Tibial artery (tissue), 4 donors: ENCODE measurements at regions of chr3 and their contacts with region 1.

Region 1: GRCh38 chr3:120417272-120417911 is 33.4 kb downstream of the FSTL1 start:
- DNase-seq: peak; percentile 94 to 97
- H3K4me3 ChIP-seq: peak overlapping the region; percentile 33 to 36
- H3K27ac ChIP-seq: peak overlapping the region; percentile 81 to 95
- H3K4me1 ChIP-seq: peaks cover 0 to 56% (median 45%) of the 10 kb centered on the region in 4 donors
- H3K27me3 ChIP-seq: no peaks in the 10 kb centered on the region
- CTCF ChIP-seq: peak; percentile 88 to 91

Region 2: GRCh38 chr3:119891944-119892721 is 525.3 kb before region 1 on chr3:
- intact Hi-C with region 1: loop called (anchors 5 kb)
- DNase-seq: no peak
- H3K4me3 ChIP-seq: no peak overlapping the region
- H3K27ac ChIP-seq: no peak overlapping the region
- H3K4me1 ChIP-seq: peaks cover 0 to 6% (median 4%) of the 10 kb centered on the region in 4 donors
- H3K27me3 ChIP-seq: no peaks in the 10 kb centered on the region
- CTCF ChIP-seq: peak; percentile 61 to 73

Region 3: GRCh38 chr3:120239644-120240043 is 177.7 kb before region 1 on chr3:
- intact Hi-C with region 1: loop called (anchors 5 kb)
- DNase-seq: no peak
- H3K4me3 ChIP-seq: no peak overlapping the region
- H3K27ac ChIP-seq: no peak overlapping the region
- H3K4me1 ChIP-seq: no peaks in the 10 kb centered on the region
- H3K27me3 ChIP-seq: no peaks in the 10 kb centered on the region
- CTCF ChIP-seq: no peak

Region 4: GRCh38 chr3:120348981-120349818 is 68.2 kb before region 1 on chr3 and contains the start of gene LRRC58:
- intact Hi-C with region 1: loop called (anchors 5 kb)
- DNase-seq: peak; percentile 89 to 95
- H3K4me3 ChIP-seq: peak within 1 kb of the TSS; percentile 65 to 87
- H3K27ac ChIP-seq: peak within 1 kb of the TSS; percentile 88
- H3K4me1 ChIP-seq: peaks cover 0 to 26% (median 17%) of the 10 kb centered on the region in 4 donors
- H3K27me3 ChIP-seq: no peaks in the 10 kb centered on the region
- CTCF ChIP-seq: no peak

Region 5: DNA sequence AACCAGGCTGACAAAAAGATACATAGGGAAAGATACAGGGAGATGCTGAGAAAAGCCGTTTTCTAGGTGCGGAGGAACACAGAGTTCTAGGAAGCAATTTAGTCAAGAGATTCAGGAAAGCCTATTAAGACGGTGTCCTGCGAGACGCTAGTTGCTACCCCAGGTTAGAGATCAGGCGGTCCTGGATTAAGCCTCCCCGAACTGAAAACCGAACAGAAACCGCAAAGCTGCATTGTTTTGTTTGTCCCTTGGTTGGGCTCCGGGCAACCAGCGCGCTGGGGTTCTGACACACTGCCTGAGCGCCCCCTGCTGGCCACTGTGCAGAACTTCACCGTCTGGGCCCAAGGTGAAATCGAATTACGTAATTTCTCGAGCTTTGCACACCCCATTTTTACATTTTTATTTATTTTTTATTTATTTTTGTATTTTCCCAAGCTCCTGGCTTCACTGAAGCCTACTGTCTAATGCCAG is 141.4 kb after region 1 on chr3:
- intact Hi-C with region 1: loop called (anchors 5 kb)
- DNase-seq: peak; percentile 91 to 92
- H3K4me3 ChIP-seq: peak overlapping the region; percentile 50 to 57
- H3K27ac ChIP-seq: peak overlapping the region; percentile 73 to 85
- H3K4me1 ChIP-seq: peaks cover 0 to 54% (median 33%) of the 10 kb centered on the region in 4 donors
- H3K27me3 ChIP-seq: no peaks in the 10 kb centered on the region
- CTCF ChIP-seq: peak; percentile 93 to 97

Region 6: GRCh38 chr3:120713262-120713661 is 295.9 kb after region 1 on chr3:
- intact Hi-C with region 1: no loop called
- DNase-seq: no peak
- H3K4me3 ChIP-seq: no peak overlapping the region
- H3K27ac ChIP-seq: no peak overlapping the region
- H3K4me1 ChIP-seq: no peaks in the 10 kb centered on the region
- H3K27me3 ChIP-seq: no peaks in the 10 kb centered on the region
- CTCF ChIP-seq: no peak